Vagina (tissue), 2 donors: ENCODE measurements at regions of chr17 and their contacts with region 1.

Region 1: GRCh38 chr17:64129764-64130558 is at the start of gene ERN1:
- DNase-seq: peak in 1 of 2 donors; percentile 96
- H3K4me3 ChIP-seq: peak within 1 kb of the TSS; percentile 82 to 95
- H3K27ac ChIP-seq: peak within 1 kb of the TSS; percentile 89
- H3K4me1 ChIP-seq: peaks cover 51% of the 10 kb centered on the region
- H3K27me3 ChIP-seq: no peaks in the 10 kb centered on the region
- CTCF ChIP-seq: no peak
- POLR2A ChIP-seq: peak in 1 of 2 donors; percentile 88
- total RNA-seq, gene ERN1: 31.4 TPM

Region 2: DNA sequence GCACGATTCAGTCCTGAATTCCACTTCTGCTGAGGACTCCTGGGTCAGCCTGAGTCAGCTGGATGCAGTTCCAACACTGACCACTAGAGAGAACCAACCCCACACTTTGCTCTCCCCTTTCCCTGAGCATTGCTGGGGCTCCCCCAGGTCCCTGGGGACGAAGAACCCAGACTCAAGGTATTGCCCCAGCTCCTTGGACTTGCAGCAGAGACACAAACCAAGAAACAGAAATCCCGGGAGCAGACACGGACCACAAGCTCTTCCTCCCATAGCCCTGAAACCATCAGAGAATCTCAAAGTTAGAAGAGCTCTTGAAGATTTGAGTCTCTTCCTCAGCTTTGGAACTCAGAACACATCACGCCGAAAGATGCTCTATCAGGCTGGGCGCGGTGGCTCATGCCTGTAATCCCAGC is 210.6 kb before region 1 on chr17:
- intact Hi-C with region 1: loop called (anchors 10 kb)
- DNase-seq: no peak
- H3K4me3 ChIP-seq: no peak overlapping the region
- H3K27ac ChIP-seq: no peak overlapping the region
- H3K4me1 ChIP-seq: no peaks in the 10 kb centered on the region
- H3K27me3 ChIP-seq: no peaks in the 10 kb centered on the region
- CTCF ChIP-seq: peak; percentile 92 to 95 (median 93)
- POLR2A ChIP-seq: no peak

Region 3: DNA sequence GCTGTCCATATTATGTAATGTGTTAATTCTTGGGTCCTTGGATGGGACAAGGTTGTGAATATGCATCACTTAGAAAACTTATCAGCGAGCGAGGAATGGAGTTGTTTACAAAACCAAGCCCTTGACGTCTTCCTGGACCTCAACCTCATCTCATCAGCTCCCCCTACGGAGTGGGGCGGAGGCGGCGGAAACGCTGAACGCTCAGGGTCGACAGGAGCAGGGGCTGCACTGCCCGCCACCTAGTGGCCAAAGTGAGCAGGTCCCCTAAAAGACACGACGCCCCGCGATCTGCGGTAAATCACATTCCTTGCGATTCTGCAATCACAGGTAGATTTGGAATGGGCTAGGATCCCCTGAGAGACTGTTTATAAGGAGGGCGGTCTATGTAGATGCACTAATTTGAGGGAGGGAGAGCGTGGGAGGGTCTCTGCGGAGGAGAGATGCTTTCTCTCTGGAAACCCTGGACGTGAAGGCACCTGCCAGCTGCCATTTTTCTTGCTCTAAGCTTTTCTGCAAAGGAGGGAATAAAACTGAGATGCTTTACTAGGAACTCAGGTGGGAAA is 104.1 kb before region 1 on chr17:
- intact Hi-C with region 1: loop called (anchors 5 kb)
- DNase-seq: peak in 1 of 2 donors; percentile 84
- H3K4me3 ChIP-seq: peak overlapping the region in 1 of 2 donors; percentile 0
- H3K27ac ChIP-seq: no peak overlapping the region
- H3K4me1 ChIP-seq: peaks cover 10% of the 10 kb centered on the region
- H3K27me3 ChIP-seq: no peaks in the 10 kb centered on the region
- CTCF ChIP-seq: peak; percentile 83 to 97 (median 90)
- POLR2A ChIP-seq: no peak

Region 4: DNA sequence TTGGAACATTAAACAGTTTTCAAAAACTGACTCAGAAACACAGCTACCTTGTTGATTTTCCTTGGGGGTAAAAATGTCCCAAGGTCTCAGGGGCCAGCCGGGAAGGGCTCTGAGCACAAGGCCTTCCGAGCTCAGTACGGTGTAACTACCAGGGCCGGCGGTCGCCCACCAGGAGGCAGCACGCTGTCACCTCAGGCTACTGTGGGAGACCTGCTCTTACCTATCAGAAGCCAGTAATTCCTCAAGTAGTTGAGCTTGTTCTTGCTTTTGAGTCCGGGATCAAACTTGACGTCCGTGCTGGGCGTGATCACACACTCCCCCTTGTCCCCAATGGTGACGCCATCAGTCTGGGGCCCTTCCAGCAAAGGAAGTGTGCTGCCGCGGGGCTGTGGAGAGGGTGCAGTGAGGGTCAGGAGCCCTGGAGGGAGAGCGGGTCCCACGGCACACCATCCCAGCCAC is 66.2 kb before region 1 on chr17:
- intact Hi-C with region 1: loop called (anchors 2 kb)
- DNase-seq: no peak
- H3K4me3 ChIP-seq: no peak overlapping the region
- H3K27ac ChIP-seq: peak overlapping the region; percentile 72
- H3K4me1 ChIP-seq: peaks cover 10% of the 10 kb centered on the region
- H3K27me3 ChIP-seq: no peaks in the 10 kb centered on the region
- CTCF ChIP-seq: peak in 2 of 3 experiments; percentile 48 to 54
- POLR2A ChIP-seq: no peak